Activated CD4-positive, alpha-beta T cell treated with anti-CD3 and anti-CD28 coated beads, Interleukin-2, amount 10 ng/mL, durations not matched to agents 24 days and 14 days (primary cell): ENCODE measurements at regions of chr15 and their contacts with region 1.

Region 1: DNA sequence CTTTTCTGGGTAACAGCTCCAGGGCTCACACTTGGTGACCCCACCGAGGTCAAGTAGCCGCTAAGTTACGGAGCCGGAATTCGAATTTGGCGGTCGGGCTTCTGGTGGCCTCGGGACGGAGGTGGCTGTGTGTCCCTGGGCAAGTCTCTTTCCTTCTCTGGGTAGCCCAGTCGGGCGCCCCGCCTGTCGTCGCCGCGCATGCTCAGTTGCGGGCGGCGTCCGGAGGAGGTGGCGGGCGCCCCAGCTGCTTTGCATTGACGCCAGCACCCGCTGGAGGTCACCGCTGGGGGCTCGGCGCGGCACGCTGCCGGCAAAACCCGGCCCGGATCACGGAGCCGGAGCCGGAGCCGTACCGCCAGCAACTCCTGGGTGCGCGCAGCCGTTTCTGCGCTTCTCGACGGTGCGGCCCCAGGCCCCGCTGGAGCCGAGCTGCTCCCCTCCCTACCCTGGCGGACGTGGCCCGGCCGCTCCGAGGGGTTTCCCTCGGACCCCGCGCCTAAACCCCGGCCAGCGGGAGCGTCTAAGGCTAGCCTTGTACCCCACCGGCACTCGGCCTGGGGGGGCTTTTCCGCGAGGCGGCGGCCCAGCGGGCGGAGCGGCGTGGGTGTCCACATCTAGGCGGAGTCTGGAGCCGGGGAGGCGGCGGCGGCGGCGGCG is 474 bp upstream of the PDE8A start:
- DNase-seq: peak; percentile 99
- H3K4me3 Mint-ChIP-seq: peak overlapping the region; percentile 88
- H3K27ac Mint-ChIP-seq: peak overlapping the region; percentile 96
- H3K4me1 Mint-ChIP-seq: peaks cover 39% of the 10 kb centered on the region
- H3K27me3 Mint-ChIP-seq: peaks cover 12% of the 10 kb centered on the region

Region 2: DNA sequence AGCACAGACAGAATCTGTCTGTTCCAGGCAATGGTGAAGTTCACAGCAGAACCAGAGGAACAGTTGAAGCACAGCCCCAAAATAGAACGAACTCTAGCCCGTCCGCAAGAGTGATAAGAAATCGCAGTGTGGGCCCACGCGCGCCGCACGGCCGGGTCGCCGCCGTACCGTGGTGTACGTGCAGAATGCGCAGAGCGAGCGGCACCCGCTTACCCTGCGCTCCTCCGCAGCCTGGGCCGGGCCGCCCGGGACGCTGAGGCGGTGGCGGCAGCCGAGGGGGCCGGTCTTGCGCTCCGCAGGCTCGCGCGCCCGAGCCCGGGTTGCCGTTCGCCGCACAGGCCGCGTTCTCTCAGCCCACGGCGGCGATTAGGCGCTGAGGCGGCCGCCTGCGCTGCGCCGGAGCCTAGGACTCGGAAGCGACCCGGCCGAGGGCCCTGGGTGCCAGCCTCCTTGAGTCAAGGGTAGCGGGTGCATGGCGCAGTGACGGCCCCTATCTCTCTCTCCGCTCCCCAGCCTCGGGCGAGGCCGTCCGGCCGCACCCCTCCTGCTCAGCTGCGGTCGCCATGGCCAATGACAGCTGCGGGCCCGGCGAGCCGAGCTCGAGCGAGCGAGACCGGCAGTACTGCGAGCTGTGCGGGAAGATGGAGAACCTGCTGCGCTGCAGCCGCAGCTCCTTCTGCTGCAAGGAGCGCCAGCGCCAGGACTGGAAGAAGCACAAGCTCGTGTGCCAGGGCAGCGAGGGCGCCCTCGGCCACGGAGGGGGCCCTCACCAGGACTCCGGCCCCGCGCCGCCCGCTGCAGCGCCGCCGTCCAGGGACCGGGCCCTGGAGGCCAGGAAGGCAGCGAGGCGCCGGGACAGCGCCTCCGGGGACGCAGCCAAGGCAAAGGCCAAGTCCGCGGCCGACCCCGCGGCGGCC is 347.6 kb before region 1 on chr15:
- intact Hi-C with region 1: loop called (anchors 1 kb)
- DNase-seq: peak; percentile 91
- H3K4me3 Mint-ChIP-seq: peak overlapping the region; percentile 97
- H3K27ac Mint-ChIP-seq: peak overlapping the region; percentile 95
- H3K4me1 Mint-ChIP-seq: peaks cover 33% of the 10 kb centered on the region
- H3K27me3 Mint-ChIP-seq: no peaks in the 10 kb centered on the region

Region 3: DNA sequence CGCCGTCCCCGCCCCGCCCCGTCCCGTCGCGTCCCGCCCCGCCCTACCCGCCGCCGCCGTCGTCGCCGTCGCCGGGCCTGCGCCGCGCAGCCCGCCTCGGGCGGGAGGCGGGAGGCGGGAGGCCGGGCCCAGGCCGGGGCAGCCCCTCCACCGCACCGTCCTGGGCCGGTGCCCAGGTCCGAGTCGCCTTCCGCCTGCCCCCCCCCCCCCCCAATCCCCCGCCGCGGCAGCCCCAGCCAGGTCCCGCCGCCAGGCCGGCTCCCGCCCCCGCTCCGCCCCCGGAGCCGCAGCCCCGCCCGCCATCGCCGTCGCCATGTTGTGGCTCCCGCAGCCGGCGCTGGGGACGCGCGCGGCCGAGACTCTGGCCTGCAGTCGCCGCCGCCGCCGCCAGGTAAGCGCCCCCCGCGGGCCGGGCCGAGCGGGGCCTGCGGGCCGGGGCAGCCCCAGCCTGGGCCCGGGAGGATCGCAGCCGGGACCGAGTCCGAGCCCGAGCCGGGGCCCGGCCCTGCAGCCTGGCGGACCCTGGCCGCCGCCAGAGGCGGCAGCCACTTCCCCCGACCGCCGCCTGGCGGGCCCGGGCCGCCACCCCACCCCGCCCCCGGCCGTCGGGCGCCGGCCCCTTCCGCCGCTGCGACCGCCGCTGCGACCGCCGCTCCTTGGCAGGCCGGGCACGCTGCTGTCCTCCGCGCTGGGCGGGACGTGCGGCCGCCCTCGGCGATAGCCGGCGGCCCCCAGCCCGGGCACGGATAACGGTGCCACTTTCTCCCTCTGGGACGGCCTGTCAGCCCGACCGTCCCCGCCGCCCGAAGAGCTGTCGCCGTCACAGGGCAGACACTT is 232.7 kb before region 1 on chr15 and contains the start of gene ZNF592:
- intact Hi-C with region 1: loop called (anchors 2 kb)
- DNase-seq: peak; percentile 94
- H3K4me3 Mint-ChIP-seq: peak within 1 kb of the TSS; percentile 97
- H3K27ac Mint-ChIP-seq: peak within 1 kb of the TSS; percentile 94
- H3K4me1 Mint-ChIP-seq: peaks cover 50% of the 10 kb centered on the region
- H3K27me3 Mint-ChIP-seq: no peaks in the 10 kb centered on the region
- total RNA-seq, gene ZNF592: 30.0 and 30.6 TPM in 2 replicates

Region 4: GRCh38 chr15:84955089-84955848 is 25.9 kb before region 1 on chr15:
- intact Hi-C with region 1: no loop called
- DNase-seq: peak; percentile 72
- H3K4me3 Mint-ChIP-seq: no peak overlapping the region
- H3K27ac Mint-ChIP-seq: no peak overlapping the region
- H3K4me1 Mint-ChIP-seq: peaks cover 2% of the 10 kb centered on the region
- H3K27me3 Mint-ChIP-seq: peaks cover 31% of the 10 kb centered on the region

Region 5: DNA sequence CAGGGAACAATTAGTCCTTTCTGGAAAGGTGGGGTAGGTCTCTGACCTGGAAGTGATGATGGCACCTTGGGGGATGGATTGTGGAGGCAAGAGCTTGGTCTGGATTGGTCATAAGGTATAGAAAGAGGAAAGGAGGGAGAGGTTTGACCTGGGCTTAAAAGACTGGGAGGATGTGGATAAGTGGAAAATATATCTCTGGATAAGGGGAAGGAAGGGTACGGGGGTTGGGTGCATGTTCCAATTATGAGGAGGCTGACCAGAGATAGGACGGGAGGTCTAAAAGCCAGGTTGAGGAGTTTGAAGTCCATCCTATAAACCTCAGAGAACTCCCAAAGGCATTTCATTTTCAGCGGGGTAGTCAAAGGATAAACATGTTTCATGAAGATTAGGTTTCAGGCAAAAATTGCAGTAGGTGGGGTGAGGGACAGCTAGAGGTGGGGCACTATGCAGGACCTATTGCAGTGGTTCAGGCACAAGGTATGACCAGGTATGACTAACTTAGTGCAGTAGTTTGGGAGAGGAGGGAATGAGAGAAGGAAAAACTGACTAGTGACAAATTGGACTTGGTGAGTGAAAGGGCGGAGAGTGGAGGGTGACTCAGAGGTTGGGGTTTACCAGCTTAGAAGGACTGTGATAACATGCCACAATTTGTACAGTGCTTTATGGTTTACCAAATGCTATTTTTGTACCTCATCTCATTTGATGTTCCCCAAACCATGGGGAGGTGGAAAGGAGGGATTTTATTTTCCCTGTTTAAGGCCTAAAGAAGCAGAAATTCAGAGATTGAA is 11.2 kb after region 1 on chr15:
- intact Hi-C with region 1: loop called (anchors 1 kb)
- DNase-seq: peak; percentile 64
- H3K4me3 Mint-ChIP-seq: no peak overlapping the region
- H3K27ac Mint-ChIP-seq: peak overlapping the region; percentile 50
- H3K4me1 Mint-ChIP-seq: peaks cover 30% of the 10 kb centered on the region
- H3K27me3 Mint-ChIP-seq: no peaks in the 10 kb centered on the region

Region 6: GRCh38 chr15:85073556-85074194 is 92.5 kb after region 1 on chr15:
- intact Hi-C with region 1: loop called (anchors 1 kb)
- DNase-seq: no peak
- H3K4me3 Mint-ChIP-seq: no peak overlapping the region
- H3K27ac Mint-ChIP-seq: peak overlapping the region; percentile 39
- H3K4me1 Mint-ChIP-seq: peaks cover 11% of the 10 kb centered on the region
- H3K27me3 Mint-ChIP-seq: no peaks in the 10 kb centered on the region